ENCODE measurements at regions of chr2 and their contacts with region 1.

Region 1: DNA sequence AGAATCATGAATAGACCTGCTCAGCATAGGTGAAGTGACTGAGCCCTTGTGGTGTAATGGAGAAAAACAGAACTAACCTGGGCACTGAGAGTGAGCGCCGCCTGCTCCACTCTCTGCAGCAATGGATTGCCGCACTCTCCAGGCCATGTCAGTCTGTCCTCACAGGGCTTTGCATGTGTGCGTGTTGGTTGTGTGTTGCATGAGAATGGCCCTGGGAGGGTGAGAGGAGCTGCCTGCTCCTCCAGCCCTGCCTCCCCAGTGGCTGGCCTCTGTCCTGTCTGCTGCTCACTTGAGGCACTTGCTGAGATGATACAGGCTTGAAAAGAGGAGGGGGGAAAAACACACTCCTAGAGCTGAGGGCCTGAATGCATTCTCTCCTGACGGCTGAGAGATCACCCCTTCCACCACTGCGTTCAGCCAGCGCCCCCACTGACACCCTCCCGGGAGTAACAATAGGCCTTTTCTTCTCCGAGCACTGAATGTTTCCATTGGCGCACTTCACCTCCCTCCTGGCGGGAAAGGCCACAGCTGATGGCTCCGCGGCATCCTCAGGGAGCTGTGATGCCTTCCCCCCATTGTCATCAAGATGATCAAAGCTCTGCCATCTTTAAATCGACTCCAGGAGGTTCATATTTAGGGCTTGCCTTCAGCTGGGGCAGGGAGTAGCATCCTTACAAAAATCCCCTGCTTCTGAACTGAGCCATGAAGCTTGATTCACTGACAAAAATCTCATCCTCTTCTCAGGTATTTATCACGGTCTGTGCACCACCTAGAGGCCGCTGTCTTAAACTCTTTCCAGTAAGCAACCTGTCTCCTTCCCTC is 49.9 kb upstream of the DAPL1 start:
- DNase-seq: peak; percentile 66
- ATAC-seq: peak; percentile 82
- H3K4me3 Mint-ChIP-seq: peak overlapping the region; percentile 71
- H3K27ac Mint-ChIP-seq: 0 out of 2 replicates have a peak overlapping the region, but pooled peaks have one; percentile 25
- H3K4me1 Mint-ChIP-seq: peaks cover 23% of the 10 kb centered on the region
- H3K27me3 Mint-ChIP-seq: peaks cover 8% of the 10 kb centered on the region
- CTCF ChIP-seq: peak; percentile 5; the same call in 1 of the 2 replicates

Region 2: GRCh38 chr2:158034199-158034866 is 710.9 kb before region 1 on chr2:
- CTCF ChIA-PET with region 1: interaction called, 52 read pairs
- POLR2A ChIA-PET with region 1: interaction called, 3 read pairs
- DNase-seq: peak; percentile 31
- ATAC-seq: peak; percentile 99
- H3K4me3 Mint-ChIP-seq: no peak overlapping the region
- H3K27ac Mint-ChIP-seq: no peak overlapping the region
- H3K4me1 Mint-ChIP-seq: peaks cover 2% of the 10 kb centered on the region; the same call in 1 of the 2 replicates
- H3K27me3 Mint-ChIP-seq: no peaks in the 10 kb centered on the region
- CTCF ChIP-seq: 0 out of 2 replicates have a peak, but pooled peaks have one; percentile 19

Region 3: GRCh38 chr2:158179660-158180059 is 565.6 kb before region 1 on chr2:
- CTCF ChIA-PET with region 1: interaction called, 20 read pairs
- POLR2A ChIA-PET with region 1: no interaction called
- DNase-seq: no peak
- ATAC-seq: peak; percentile 53
- H3K4me3 Mint-ChIP-seq: no peak overlapping the region
- H3K27ac Mint-ChIP-seq: no peak overlapping the region
- H3K4me1 Mint-ChIP-seq: peaks cover 27% of the 10 kb centered on the region
- H3K27me3 Mint-ChIP-seq: peaks cover 4% of the 10 kb centered on the region; the same call in 1 of the 2 replicates
- CTCF ChIP-seq: no peak

Region 4: GRCh38 chr2:158676696-158677095 is 68.6 kb before region 1 on chr2:
- CTCF ChIA-PET with region 1: interaction called, 11 read pairs
- POLR2A ChIA-PET with region 1: no interaction called
- DNase-seq: no peak
- ATAC-seq: no peak
- H3K4me3 Mint-ChIP-seq: no peak overlapping the region
- H3K27ac Mint-ChIP-seq: peak overlapping the region; percentile 71
- H3K4me1 Mint-ChIP-seq: peaks cover 23% of the 10 kb centered on the region
- H3K27me3 Mint-ChIP-seq: no peaks in the 10 kb centered on the region
- CTCF ChIP-seq: no peak

Region 5: GRCh38 chr2:158723917-158724690 is 21.2 kb before region 1 on chr2:
- CTCF ChIA-PET with region 1: interaction called, 132 read pairs
- POLR2A ChIA-PET with region 1: interaction called, 3 read pairs
- DNase-seq: peak; percentile 55
- ATAC-seq: peak; percentile 92
- H3K4me3 Mint-ChIP-seq: no peak overlapping the region
- H3K27ac Mint-ChIP-seq: peak overlapping the region; percentile 50
- H3K4me1 Mint-ChIP-seq: peaks cover 23% of the 10 kb centered on the region
- H3K27me3 Mint-ChIP-seq: no peaks in the 10 kb centered on the region; the same call in 1 of the 2 replicates
- CTCF ChIP-seq: peak; percentile 39